ENCODE measurements at regions of chr13 and their contacts with region 1.

Region 1: GRCh38 chr13:48318821-48319511 is 15.4 kb downstream of the RB1 start:
- DNase-seq: no peak
- H3K4me3 ChIP-seq: no peak overlapping the region
- CTCF ChIP-seq: no peak
- POLR2A ChIP-seq: no peak

Region 2: GRCh38 chr13:48398450-48399095 is 79.6 kb after region 1 on chr13:
- intact Hi-C with region 1: loop called (anchors 10 kb)
- DNase-seq: no peak
- H3K4me3 ChIP-seq: no peak overlapping the region
- CTCF ChIP-seq: no peak
- POLR2A ChIP-seq: no peak

Measured in lower leg skin (tissue), 4 donors.